Mammary epithelial cell (primary cell): ENCODE measurements at regions of chr1 and their contacts with region 1.

Region 1: GRCh38 chr1:216750012-216750627 is 26.9 kb upstream of the ESRRG start:
- DNase-seq: peak; percentile 45
- H3K4me3 ChIP-seq: no peak overlapping the region
- H3K27ac ChIP-seq: no peak overlapping the region
- H3K4me1 ChIP-seq: no peaks in the 10 kb centered on the region
- H3K27me3 ChIP-seq: no peaks in the 10 kb centered on the region
- CTCF ChIP-seq: peak; percentile 79 to 83

Region 2: DNA sequence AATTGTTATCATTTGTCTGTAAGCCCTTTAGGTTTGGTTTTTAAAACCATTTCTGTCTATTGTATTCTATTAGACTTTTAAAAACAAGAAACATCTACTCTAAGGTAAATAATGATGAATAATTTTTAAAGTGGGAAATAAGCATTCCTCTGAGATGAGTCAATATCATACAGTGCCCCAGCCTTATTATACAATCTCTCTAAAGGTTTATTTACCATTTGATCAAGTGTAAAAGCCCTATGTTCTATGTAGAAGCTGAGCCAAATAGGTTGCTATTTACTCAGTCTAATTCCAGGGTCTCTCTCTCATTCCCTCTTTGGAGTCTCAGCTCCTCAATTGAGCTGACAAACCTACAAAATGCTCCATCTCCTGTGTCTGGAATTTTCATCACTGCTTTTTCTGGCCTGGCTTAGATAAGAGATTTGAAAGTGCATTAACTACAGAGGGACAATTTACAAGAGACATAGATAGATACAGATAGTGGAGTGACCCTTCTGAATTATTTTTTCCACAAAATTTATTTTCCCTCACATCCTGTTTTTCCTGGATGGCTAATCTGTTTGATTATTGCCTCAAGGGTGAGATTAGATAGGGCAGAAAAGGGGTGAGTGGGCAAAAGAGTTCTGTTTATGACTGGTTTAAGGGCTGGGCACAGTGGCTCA is 302.1 kb before region 1 on chr1:
- CTCF ChIA-PET with region 1: no interaction called
- dilution Hi-C with region 1: no loop called
- in situ Hi-C with region 1: no loop called
- intact Hi-C with region 1: no loop called
- DNase-seq: peak; percentile 14
- H3K4me3 ChIP-seq: no peak overlapping the region
- H3K27ac ChIP-seq: no peak overlapping the region
- H3K4me1 ChIP-seq: peaks cover 3% of the 10 kb centered on the region
- H3K27me3 ChIP-seq: no peaks in the 10 kb centered on the region
- CTCF ChIP-seq: no peak

Region 3: DNA sequence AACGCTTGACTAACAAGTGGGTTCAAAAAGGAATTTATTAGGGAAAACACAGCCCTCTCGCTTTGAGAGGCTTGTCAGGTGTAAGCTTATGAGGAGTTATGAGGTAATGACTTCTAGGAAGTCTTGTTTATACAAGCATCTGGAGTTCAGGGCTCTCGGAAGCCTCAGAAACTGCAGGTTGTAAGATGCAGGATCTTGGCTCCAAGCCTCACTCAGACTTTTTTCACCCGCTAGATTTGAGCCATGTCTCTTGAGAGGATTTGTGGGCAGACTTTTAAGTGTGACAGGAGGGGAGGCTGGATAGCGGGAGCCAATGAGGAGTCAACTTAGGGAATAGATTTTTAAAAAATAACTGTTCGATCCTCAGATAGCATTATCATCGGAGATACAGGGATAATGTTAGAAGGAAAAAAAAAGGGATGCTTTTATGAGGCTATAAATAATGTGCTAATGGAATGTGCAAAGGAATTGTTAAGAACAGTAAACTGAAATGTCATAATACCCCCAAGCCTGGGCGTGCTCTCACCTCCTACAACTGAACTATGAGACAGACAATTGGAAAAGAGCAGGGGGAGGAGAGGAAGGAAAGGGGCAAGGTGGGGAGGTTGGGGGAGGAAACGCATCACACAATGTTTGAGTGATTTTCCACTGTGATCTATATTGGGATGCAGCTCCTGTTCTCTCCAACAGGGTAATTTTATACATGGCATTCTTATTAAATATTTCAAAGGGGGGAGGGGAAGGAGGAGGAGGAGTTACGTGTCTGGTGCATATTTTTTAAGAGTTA is 80.5 kb after region 1 on chr1:
- CTCF ChIA-PET with region 1: no interaction called
- dilution Hi-C with region 1: no loop called
- in situ Hi-C with region 1: no loop called
- intact Hi-C with region 1: no loop called
- DNase-seq: no peak
- H3K4me3 ChIP-seq: no peak overlapping the region
- H3K27ac ChIP-seq: no peak overlapping the region
- H3K4me1 ChIP-seq: no peaks in the 10 kb centered on the region
- H3K27me3 ChIP-seq: no peaks in the 10 kb centered on the region
- CTCF ChIP-seq: no peak

Region 4: DNA sequence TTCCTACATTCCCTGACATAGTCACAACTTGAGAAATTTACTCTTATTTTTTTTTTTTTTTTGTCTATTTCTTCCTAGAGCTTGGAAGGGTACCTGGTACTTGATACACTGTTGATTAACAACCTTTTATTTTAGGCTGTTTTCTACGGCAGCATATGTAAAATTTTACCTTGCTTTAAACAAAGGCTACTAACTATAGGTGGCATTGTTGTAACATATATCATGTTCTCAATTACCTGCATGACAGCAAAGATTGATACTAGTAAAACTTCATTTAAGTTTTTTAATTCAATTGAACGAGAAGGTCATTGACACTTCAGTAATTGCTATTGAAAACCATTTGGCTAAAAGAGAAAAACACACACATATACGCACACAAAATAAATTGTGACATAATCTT is 211.4 kb after region 1 on chr1:
- CTCF ChIA-PET with region 1: no interaction called
- dilution Hi-C with region 1: no loop called
- in situ Hi-C with region 1: no loop called
- intact Hi-C with region 1: loop called (anchors 1 kb)
- DNase-seq: no peak
- H3K4me3 ChIP-seq: no peak overlapping the region
- H3K27ac ChIP-seq: no peak overlapping the region
- H3K4me1 ChIP-seq: no peaks in the 10 kb centered on the region
- H3K27me3 ChIP-seq: no peaks in the 10 kb centered on the region
- CTCF ChIP-seq: peak in 1 of 2 donors; percentile 24

Region 5: GRCh38 chr1:217230412-217230811 is 480.3 kb after region 1 on chr1:
- CTCF ChIA-PET with region 1: no interaction called
- dilution Hi-C with region 1: no loop called
- in situ Hi-C with region 1: no loop called
- intact Hi-C with region 1: loop called (anchors 1 kb)
- DNase-seq: no peak
- H3K4me3 ChIP-seq: no peak overlapping the region
- H3K27ac ChIP-seq: no peak overlapping the region
- H3K4me1 ChIP-seq: no peaks in the 10 kb centered on the region
- H3K27me3 ChIP-seq: no peaks in the 10 kb centered on the region
- CTCF ChIP-seq: no peak

Region 6: DNA sequence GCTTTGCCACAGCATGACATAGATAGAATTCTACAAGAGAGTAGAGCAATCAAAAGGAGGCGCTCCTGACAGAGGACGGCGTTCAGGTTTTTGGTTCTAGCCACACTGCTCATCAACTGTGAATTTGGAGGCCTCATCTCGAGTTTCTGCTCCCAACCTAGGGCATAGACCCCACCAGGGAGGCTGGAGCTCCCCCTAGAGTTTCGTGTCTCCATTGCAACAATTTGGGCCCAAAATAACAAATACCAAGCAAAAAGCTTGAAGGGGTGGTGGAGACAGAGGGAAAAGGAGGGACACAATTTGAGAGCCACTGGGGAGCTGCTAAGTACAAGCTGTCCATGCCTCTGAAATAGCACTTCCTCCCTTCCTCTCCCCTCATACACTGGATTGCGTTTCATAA is 583.8 kb after region 1 on chr1:
- CTCF ChIA-PET with region 1: no interaction called
- dilution Hi-C with region 1: no loop called
- in situ Hi-C with region 1: loop called in 1 of 2 experiments (anchors 25 kb)
- intact Hi-C with region 1: loop called (anchors 1 kb)
- DNase-seq: peak; percentile 12
- H3K4me3 ChIP-seq: no peak overlapping the region
- H3K27ac ChIP-seq: no peak overlapping the region
- H3K4me1 ChIP-seq: no peaks in the 10 kb centered on the region
- H3K27me3 ChIP-seq: no peaks in the 10 kb centered on the region
- CTCF ChIP-seq: peak; percentile 60 to 81

Region 7: DNA sequence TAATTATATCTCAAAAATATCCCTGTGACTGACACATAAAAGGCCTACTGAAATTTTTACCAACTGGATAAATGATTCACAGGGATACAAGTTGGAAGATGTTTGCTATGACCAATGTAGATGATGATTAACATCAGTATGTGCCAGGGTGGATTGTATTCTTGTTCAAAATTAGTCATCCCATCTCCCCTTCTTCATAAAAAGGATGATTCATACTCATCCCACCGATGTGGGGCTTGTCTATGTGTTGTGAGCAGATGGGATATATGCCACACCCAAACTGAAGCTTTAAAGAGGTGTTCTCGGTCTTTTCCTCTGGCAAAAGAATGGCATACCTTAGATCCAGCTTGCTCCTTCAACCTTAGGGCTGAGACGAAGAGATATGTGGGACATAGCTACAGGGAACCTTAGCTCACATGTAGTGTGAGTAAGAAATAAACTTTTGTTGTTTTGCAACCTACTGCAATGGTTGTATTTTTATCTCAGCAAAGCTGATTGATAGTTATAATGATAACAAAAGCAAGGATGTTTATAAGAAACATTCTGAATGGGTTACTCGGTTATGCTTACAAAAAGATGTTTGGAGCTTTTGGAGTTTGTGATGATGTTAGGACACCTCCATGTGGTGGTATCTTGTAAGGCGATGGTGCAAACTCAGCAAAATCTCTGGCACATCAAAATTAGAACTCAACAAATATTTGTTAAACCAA is 910.4 kb after region 1 on chr1:
- CTCF ChIA-PET with region 1: interaction called, 6 read pairs
- dilution Hi-C with region 1: no loop called
- in situ Hi-C with region 1: no loop called
- intact Hi-C with region 1: loop called (anchors 1 kb)
- DNase-seq: peak; percentile 98
- H3K4me3 ChIP-seq: peak overlapping the region in 2 of 3 experiments; percentile 6 to 14
- H3K27ac ChIP-seq: peak overlapping the region; percentile 79
- H3K4me1 ChIP-seq: peaks cover 20% of the 10 kb centered on the region
- H3K27me3 ChIP-seq: no peaks in the 10 kb centered on the region
- CTCF ChIP-seq: peak; percentile 48 to 62